Activated T-helper 1 cell treated with anti-CD3 and anti-CD28 coated beads, Interleukin-12 subunit alpha, Interleukin-12 subunit beta, Interleukin-2, Interleukin-4 antibody, amounts not matched to agents 30 ng/mL and 10 ng/mL and 1 ng/mL, durations not matched to agents 14 hours and 24 hours and 36 hours (primary cell): ENCODE measurements at regions of chr9 and their contacts with region 1.

Region 1: GRCh38 chr9:120936011-120936763 is 9.6 kb upstream of the TRAF1 start:
- DNase-seq: peak; percentile 77
- H3K4me3 Mint-ChIP-seq: peak overlapping the region; percentile 59
- H3K27ac Mint-ChIP-seq: peak overlapping the region; percentile 90
- H3K4me1 Mint-ChIP-seq: peaks cover 58% of the 10 kb centered on the region
- H3K27me3 Mint-ChIP-seq: peaks cover 3% of the 10 kb centered on the region

Region 2: DNA sequence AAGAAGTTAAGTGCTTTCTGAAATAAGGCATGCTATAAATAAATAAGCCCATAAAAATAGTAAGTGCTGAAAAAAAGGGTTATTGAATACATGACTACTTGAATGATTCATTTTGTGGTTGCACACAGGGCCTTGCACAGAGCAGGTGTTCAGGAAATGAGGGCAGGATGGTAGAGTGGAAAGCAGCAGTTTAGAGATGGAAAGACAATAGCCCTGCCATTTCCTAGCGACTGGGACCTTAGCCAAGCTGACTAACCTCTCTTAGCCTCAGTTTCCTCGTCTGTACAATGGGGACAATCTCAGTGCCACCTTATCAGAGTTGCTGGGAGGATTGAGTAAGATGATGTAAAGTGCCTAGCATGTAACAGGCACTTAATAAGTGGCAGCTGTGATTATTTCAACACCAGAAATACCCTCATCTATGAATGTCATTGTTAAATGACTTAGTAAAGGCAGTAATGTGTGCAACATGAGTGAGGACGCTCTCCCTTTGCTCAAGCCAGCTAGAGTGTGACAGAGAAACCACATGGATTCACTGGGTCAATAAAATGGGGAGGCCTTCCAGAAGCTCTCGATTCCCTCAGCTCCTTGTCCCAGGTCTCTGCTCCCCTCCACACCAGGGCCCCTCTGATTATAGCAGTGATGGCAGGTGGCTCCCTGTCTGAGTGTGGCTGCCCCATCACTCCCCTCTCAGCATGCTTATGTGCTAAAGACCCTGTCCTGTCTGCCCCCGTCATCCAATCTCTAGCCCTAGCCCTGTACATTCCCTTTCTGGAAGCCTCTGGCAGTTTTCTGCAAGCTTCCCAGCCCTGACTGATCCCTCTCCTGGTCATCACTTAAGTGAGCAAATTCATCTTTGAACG is 43.2 kb before region 1 on chr9:
- intact Hi-C with region 1: loop called (anchors 1 kb)
- DNase-seq: peak; percentile 62
- H3K4me3 Mint-ChIP-seq: peak overlapping the region; percentile 69
- H3K27ac Mint-ChIP-seq: peak overlapping the region; percentile 99
- H3K4me1 Mint-ChIP-seq: peaks cover 74% of the 10 kb centered on the region
- H3K27me3 Mint-ChIP-seq: no peaks in the 10 kb centered on the region